ENCODE measurements at regions of chr5 and their contacts with region 1.

Region 1: GRCh38 chr5:178163772-178164735 is 10.4 kb upstream of the NHP2 start:
- DNase-seq: peak; percentile 91 to 94
- H3K4me3 ChIP-seq: peak overlapping the region in 1 of 4 donors; percentile 15
- H3K27ac ChIP-seq: no peak overlapping the region
- H3K4me1 ChIP-seq: peaks cover 0 to 11% (median 9%) of the 10 kb centered on the region in 4 donors
- H3K27me3 ChIP-seq: peaks cover 0 to 44% (median 23%) of the 10 kb centered on the region in 3 donors
- CTCF ChIP-seq: peak in 5 of 7 experiments; percentile 97 to 99 (median 99)
- EP300 ChIP-seq: no peak
- POLR2A ChIP-seq: no peak

Region 2: GRCh38 chr5:178069909-178070308 is 94.1 kb before region 1 on chr5:
- intact Hi-C with region 1: loop called (anchors 5 kb)
- DNase-seq: peak in 1 of 2 donors; percentile 51
- H3K4me3 ChIP-seq: no peak overlapping the region
- H3K27ac ChIP-seq: no peak overlapping the region
- H3K4me1 ChIP-seq: no peaks in the 10 kb centered on the region
- H3K27me3 ChIP-seq: peaks cover 0 to 34% (median 9%) of the 10 kb centered on the region in 3 donors
- CTCF ChIP-seq: no peak
- EP300 ChIP-seq: no peak
- POLR2A ChIP-seq: no peak

Region 3: GRCh38 chr5:178385496-178385890 is 221.4 kb after region 1 on chr5:
- intact Hi-C with region 1: no loop called
- DNase-seq: no peak
- H3K4me3 ChIP-seq: no peak overlapping the region
- H3K27ac ChIP-seq: no peak overlapping the region
- H3K4me1 ChIP-seq: peaks cover 0 to 12% (median 3%) of the 10 kb centered on the region in 4 donors
- H3K27me3 ChIP-seq: peaks cover 0 to 55% (median 0%) of the 10 kb centered on the region in 3 donors
- CTCF ChIP-seq: no peak
- EP300 ChIP-seq: no peak
- POLR2A ChIP-seq: no peak